ENCODE measurements at regions of chr17 and their contacts with region 1.

Region 1: GRCh38 chr17:21689604-21690003 is 2.7 kb upstream of the KCNJ18 start:
- DNase-seq: peak in 1 of 2 donors; percentile 63
- H3K4me3 ChIP-seq: no peak overlapping the region
- H3K27ac ChIP-seq: no peak overlapping the region
- H3K4me1 ChIP-seq: no peaks in the 10 kb centered on the region
- H3K27me3 ChIP-seq: no peaks in the 10 kb centered on the region
- CTCF ChIP-seq: no peak
- EP300 ChIP-seq: no peak
- POLR2A ChIP-seq: no peak

Region 2: GRCh38 chr17:21400816-21401593 is 288.6 kb before region 1 on chr17:
- intact Hi-C with region 1: loop called (anchors 5 kb)
- DNase-seq: no peak
- H3K4me3 ChIP-seq: no peak overlapping the region
- H3K27ac ChIP-seq: peak overlapping the region in 1 of 5 donors; percentile 75
- H3K4me1 ChIP-seq: peaks cover 0 to 20% (median 0%) of the 10 kb centered on the region in 4 donors
- H3K27me3 ChIP-seq: no peaks in the 10 kb centered on the region
- CTCF ChIP-seq: no peak
- EP300 ChIP-seq: no peak
- POLR2A ChIP-seq: no peak

Measured in stomach (tissue), 19 donors.